ENCODE measurements at regions of chr4 and their contacts with region 1.

Region 1: DNA sequence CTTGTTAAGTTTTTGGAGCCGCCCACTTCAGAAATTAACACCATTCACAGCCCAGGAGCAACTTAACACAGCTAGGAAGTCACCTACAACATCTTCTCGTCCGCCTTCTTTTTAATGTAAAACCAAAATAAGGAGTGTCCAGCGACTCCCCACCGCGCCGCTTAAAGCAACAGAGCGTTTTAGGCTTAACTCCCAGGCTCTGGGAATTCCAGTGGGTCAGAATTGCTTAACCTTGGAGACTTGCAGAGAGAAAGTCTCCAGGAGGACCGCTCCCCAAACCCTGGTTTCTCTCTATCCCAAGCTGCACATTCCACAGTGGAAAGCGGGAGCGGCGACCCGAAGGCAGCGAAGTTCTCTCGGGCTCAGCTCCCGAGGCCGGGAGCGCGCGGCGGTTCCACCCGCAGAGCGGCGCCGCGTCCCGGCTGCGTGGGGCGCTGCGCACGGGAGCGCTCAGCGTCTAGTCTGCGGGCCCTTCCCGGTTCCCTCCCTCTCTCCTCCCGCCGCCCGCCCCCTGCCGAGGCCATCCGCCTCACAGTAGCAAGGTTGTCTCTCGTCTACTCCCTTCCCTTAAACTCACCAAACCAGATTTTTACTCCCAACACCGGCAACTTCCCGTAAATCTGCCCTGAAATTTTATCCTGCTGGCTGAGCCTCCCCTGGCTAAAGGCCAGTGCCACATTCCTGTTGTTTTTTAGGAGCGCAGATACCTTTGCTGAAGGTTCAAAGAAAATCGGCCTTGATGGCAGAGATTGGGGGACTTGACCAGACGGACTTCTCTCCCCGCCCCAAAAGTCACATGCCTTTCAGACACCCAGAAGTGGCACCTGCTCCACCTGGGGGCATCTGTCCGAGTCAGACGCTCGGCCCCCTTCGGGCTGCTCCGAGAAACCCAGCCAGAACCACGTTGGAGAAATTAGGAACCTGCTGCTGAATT is at the start of gene RBM47:
- DNase-seq: no peak
- ATAC-seq: peak; percentile 72
- H3K4me3 ChIP-seq: peak within 1 kb of the TSS; percentile 94
- H3K27ac ChIP-seq: peak within 1 kb of the TSS; percentile 92
- H3K4me1 ChIP-seq: peaks cover 10% of the 10 kb centered on the region
- H3K27me3 ChIP-seq: no peaks in the 10 kb centered on the region
- CTCF ChIP-seq: peak; percentile 21 to 27 (median 27); a peak in 3 of 6 replicates
- EP300 ChIP-seq: no peak
- POLR2A ChIP-seq: peak; percentile 61
- RAD21 ChIP-seq: 0 out of 2 replicates have a peak, but pooled peaks have one; percentile 2
- polyA plus RNA-seq, gene RBM47: 7.9 to 10.1 TPM

Region 2: GRCh38 chr4:40388239-40388985 is 241.3 kb before region 1 on chr4:
- CTCF ChIA-PET with region 1: no interaction called
- POLR2A ChIA-PET with region 1: no interaction called
- RAD21 ChIA-PET with region 1: no interaction called
- SMC1A ChIA-PET with region 1: no interaction called
- in situ Hi-C with region 1: no loop called
- intact Hi-C with region 1: no loop called
- DNase-seq: no peak
- ATAC-seq: peak; percentile 25; the same call in 2 of the 3 replicates
- H3K4me3 ChIP-seq: no peak overlapping the region
- H3K27ac ChIP-seq: no peak overlapping the region
- H3K4me1 ChIP-seq: no peaks in the 10 kb centered on the region
- H3K27me3 ChIP-seq: no peaks in the 10 kb centered on the region
- CTCF ChIP-seq: no peak
- EP300 ChIP-seq: no peak
- POLR2A ChIP-seq: no peak
- RAD21 ChIP-seq: no peak

Region 3: GRCh38 chr4:40462326-40462725 is 167.3 kb before region 1 on chr4:
- CTCF ChIA-PET with region 1: no interaction called
- POLR2A ChIA-PET with region 1: no interaction called
- RAD21 ChIA-PET with region 1: interaction called, 3 read pairs
- SMC1A ChIA-PET with region 1: no interaction called
- in situ Hi-C with region 1: no loop called
- intact Hi-C with region 1: loop called (anchors 10 kb)
- DNase-seq: peak; percentile 57
- ATAC-seq: peak; percentile 93
- H3K4me3 ChIP-seq: no peak overlapping the region
- H3K27ac ChIP-seq: peak overlapping the region; percentile 61
- H3K4me1 ChIP-seq: peaks cover 27% of the 10 kb centered on the region
- H3K27me3 ChIP-seq: no peaks in the 10 kb centered on the region
- CTCF ChIP-seq: peak in 2 of 3 experiments; percentile 5 to 40; a peak in 3 of 6 replicates
- EP300 ChIP-seq: peak; percentile 48 to 87; a peak in 3 of 4 replicates
- POLR2A ChIP-seq: no peak
- RAD21 ChIP-seq: peak; percentile 51; the same call in 1 of the 2 replicates

Region 4: DNA sequence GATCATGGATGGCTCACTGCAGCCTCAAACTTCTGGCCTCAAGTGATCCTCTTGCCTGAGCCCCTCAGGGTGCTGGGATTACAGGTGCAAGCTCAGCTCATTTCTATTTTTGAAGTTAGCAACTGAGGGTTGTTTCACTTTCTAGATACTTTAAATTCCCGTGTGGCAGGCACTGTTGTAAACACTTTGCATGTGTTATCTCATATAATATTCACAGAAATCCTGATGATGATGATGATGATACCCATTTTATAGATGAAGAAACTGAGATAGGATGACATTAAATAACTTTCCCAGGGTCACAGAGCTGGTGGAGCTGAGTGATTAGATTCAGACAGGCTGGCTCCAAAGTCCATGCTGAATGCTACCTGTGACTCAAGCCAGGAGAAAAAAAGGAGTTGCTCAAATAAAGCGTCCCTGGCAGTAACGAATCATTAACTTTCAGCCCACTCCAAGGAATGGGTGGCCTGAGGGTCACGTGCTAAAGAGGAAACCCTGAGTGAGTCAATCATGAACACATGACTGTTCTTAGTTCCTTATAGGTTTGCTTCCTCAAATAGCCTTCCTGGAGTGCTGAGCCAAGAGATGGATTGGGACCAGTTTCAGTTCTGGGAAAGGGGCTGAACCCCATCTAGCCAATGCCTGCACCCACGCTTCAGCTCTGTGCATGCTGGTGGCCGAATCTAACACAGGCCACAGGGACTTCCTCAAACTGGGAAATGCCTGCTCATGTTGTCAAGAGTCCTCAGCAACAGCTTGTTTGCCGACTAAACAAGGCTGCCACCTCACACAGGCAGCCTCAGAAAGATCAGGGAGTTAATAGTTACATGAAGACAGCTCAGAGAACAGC is 52.8 kb before region 1 on chr4:
- CTCF ChIA-PET with region 1: interaction called, 5 read pairs
- POLR2A ChIA-PET with region 1: interaction called, 24 read pairs
- RAD21 ChIA-PET with region 1: interaction called, 29 read pairs
- SMC1A ChIA-PET with region 1: interaction called, 27 read pairs
- in situ Hi-C with region 1: no loop called
- intact Hi-C with region 1: no loop called
- DNase-seq: peak; percentile 82
- ATAC-seq: peak; percentile 80
- H3K4me3 ChIP-seq: peak overlapping the region; percentile 35
- H3K27ac ChIP-seq: peak overlapping the region; percentile 89
- H3K4me1 ChIP-seq: peaks cover 57% of the 10 kb centered on the region
- H3K27me3 ChIP-seq: no peaks in the 10 kb centered on the region
- CTCF ChIP-seq: no peak
- EP300 ChIP-seq: peak in 1 of 2 experiments; percentile 63; a peak in 2 of 4 replicates
- POLR2A ChIP-seq: no peak
- RAD21 ChIP-seq: no peak

Region 5: DNA sequence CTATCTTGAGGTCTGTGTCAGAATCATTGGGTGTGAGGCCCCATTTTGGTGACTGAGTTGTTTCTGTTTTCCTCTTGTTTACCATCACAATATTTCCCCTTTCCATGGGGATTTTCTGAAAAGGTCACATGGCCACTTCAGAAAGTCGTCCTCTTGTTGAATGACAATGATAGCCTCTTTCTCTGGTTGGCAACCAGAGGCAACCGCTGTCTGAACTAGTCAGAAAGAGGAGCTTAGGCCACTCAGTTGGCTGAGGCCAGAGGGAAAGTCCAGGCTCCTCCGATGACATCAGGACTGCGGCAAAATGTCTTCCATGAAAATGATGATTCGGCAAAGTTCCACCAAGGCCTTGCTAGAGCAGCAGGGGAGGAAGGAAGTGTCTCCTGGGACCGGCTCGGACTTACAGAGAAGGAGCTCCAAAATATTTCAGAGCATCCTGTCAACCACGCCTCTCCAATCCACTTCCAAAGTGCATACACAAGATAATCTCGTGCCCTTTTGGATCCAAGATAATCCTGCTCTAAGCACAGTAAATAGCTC is 19.1 kb after region 1 on chr4:
- CTCF ChIA-PET with region 1: interaction called, 4 read pairs
- POLR2A ChIA-PET with region 1: interaction called, 8 read pairs
- RAD21 ChIA-PET with region 1: interaction called, 6 read pairs
- SMC1A ChIA-PET with region 1: interaction called, 37 read pairs
- in situ Hi-C with region 1: no loop called
- intact Hi-C with region 1: no loop called
- DNase-seq: no peak
- ATAC-seq: peak; percentile 84
- H3K4me3 ChIP-seq: no peak overlapping the region
- H3K27ac ChIP-seq: 0 out of 2 replicates have a peak overlapping the region, but pooled peaks have one; percentile 2
- H3K4me1 ChIP-seq: peaks cover 17% of the 10 kb centered on the region
- H3K27me3 ChIP-seq: no peaks in the 10 kb centered on the region
- CTCF ChIP-seq: no peak
- EP300 ChIP-seq: no peak
- POLR2A ChIP-seq: no peak
- RAD21 ChIP-seq: no peak

Region 6: GRCh38 chr4:40662962-40663604 is 33.4 kb after region 1 on chr4:
- CTCF ChIA-PET with region 1: interaction called, 5 read pairs
- POLR2A ChIA-PET with region 1: interaction called, 80 read pairs
- RAD21 ChIA-PET with region 1: interaction called, 33 read pairs
- SMC1A ChIA-PET with region 1: interaction called, 215 read pairs
- in situ Hi-C with region 1: no loop called
- intact Hi-C with region 1: no loop called
- DNase-seq: peak; percentile 82
- ATAC-seq: peak; percentile 85
- H3K4me3 ChIP-seq: peak overlapping the region; percentile 28; the same call in 1 of the 2 replicates
- H3K27ac ChIP-seq: peak overlapping the region; percentile 66
- H3K4me1 ChIP-seq: peaks cover 19% of the 10 kb centered on the region
- H3K27me3 ChIP-seq: no peaks in the 10 kb centered on the region
- CTCF ChIP-seq: no peak
- EP300 ChIP-seq: 0 out of 4 replicates have a peak, but pooled peaks of 1 of the 2 experiments have one; percentile 35
- POLR2A ChIP-seq: no peak
- RAD21 ChIP-seq: 0 out of 2 replicates have a peak, but pooled peaks have one; percentile 6

Region 7: GRCh38 chr4:40825014-40825838 is 195.6 kb after region 1 on chr4:
- CTCF ChIA-PET with region 1: no interaction called
- POLR2A ChIA-PET with region 1: no interaction called
- RAD21 ChIA-PET with region 1: no interaction called
- SMC1A ChIA-PET with region 1: no interaction called
- in situ Hi-C with region 1: no loop called
- intact Hi-C with region 1: no loop called
- DNase-seq: no peak
- ATAC-seq: no peak; the same call in 2 of the 3 replicates
- H3K4me3 ChIP-seq: no peak overlapping the region
- H3K27ac ChIP-seq: no peak overlapping the region
- H3K4me1 ChIP-seq: peaks cover 10% of the 10 kb centered on the region
- H3K27me3 ChIP-seq: no peaks in the 10 kb centered on the region
- CTCF ChIP-seq: no peak
- EP300 ChIP-seq: no peak
- POLR2A ChIP-seq: no peak
- RAD21 ChIP-seq: no peak

Measured in GM12878 (cell line).